Heart left ventricle (tissue), 16 donors: ENCODE measurements at regions of chr9 and their contacts with region 1.

Region 1: GRCh38 chr9:110745676-110746075 is 77.1 kb downstream of the MUSK start:
- DNase-seq: no peak
- ATAC-seq: peak in 1 of 4 donors; percentile 29
- H3K4me3 ChIP-seq: no peak overlapping the region
- H3K27ac ChIP-seq: peak overlapping the region in 2 of 12 donors; percentile 21 to 22
- H3K4me1 ChIP-seq: peaks cover 0 to 33% (median 7%) of the 10 kb centered on the region in 12 donors
- H3K27me3 ChIP-seq: no peaks in the 10 kb centered on the region
- CTCF ChIP-seq: no peak
- POLR2A ChIP-seq: no peak

Region 2: DNA sequence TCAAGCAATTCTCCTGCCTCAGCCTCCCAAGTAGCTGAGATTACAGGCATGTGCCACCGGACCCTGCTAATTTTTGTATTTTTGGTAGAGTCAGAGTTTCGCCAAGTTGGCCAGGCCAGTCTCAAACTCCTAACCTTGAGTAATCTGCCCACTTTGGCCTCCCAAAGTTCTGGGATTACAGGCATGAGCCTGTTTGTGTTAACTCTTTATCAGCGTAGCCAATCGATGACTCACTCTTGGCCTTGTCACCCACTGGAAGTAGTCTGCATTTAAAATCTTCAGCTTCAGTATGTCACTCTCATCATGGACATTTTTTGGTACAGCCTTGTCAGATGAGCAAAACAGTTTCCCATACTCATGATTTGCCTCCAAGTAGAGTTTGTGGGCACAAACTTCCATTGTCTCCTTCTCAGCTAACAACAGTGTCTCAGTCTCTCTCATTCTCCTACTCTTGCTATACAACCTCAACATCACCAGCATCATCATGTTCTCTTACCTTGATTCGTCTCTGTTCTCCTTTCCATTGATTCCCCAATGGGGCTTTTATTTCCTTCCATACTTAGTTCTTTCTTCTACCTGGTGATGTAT is 54.6 kb before region 1 on chr9:
- intact Hi-C with region 1: loop called in 1 of 10 experiments (anchors 2 kb)
- DNase-seq: no peak
- ATAC-seq: no peak
- H3K4me3 ChIP-seq: no peak overlapping the region
- H3K27ac ChIP-seq: no peak overlapping the region
- H3K4me1 ChIP-seq: no peaks in the 10 kb centered on the region
- H3K27me3 ChIP-seq: no peaks in the 10 kb centered on the region
- CTCF ChIP-seq: no peak
- POLR2A ChIP-seq: no peak